ENCODE measurements at regions of chr20 and their contacts with region 1.

Region 1: GRCh38 chr20:18466894-18467730 is at the starts of genes DZANK1 and POLR3F:
- DNase-seq: peak; percentile 98
- H3K4me3 Mint-ChIP-seq: peak within 1 kb of the TSS; percentile 92
- H3K27ac Mint-ChIP-seq: peak within 1 kb of the TSS; percentile 89
- H3K4me1 Mint-ChIP-seq: peaks cover 20% of the 10 kb centered on the region
- H3K27me3 Mint-ChIP-seq: no peaks in the 10 kb centered on the region
- total RNA-seq, gene DZANK1: 1.8 and 1.9 TPM in 2 replicates
- total RNA-seq, gene POLR3F: 15.0 and 15.3 TPM in 2 replicates

Region 2: GRCh38 chr20:18412221-18412901 is 54.8 kb before region 1 on chr20:
- intact Hi-C with region 1: loop called (anchors 1 kb)
- DNase-seq: no peak
- H3K4me3 Mint-ChIP-seq: no peak overlapping the region
- H3K27ac Mint-ChIP-seq: no peak overlapping the region
- H3K4me1 Mint-ChIP-seq: peaks cover 5% of the 10 kb centered on the region
- H3K27me3 Mint-ChIP-seq: no peaks in the 10 kb centered on the region

Region 3: DNA sequence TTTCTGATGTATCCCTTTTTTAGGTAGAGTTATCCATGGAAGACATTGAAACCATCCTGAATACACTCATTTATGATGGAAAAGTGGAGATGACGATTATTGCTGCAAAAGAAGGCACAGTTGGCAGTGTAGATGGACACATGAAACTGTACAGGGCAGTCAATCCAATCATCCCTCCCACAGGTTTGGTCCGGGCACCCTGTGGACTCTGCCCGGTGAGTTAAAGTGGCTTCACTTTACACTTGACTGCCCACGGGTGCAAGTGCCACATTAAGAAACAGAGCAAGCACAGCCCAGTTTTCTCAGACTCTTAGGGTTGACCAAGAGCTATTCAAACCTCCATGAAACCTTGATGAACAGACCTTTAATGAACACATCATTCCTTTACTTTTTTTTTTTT is 14.5 kb after region 1 on chr20:
- intact Hi-C with region 1: no loop called
- DNase-seq: no peak
- H3K4me3 Mint-ChIP-seq: no peak overlapping the region
- H3K27ac Mint-ChIP-seq: no peak overlapping the region
- H3K4me1 Mint-ChIP-seq: no peaks in the 10 kb centered on the region
- H3K27me3 Mint-ChIP-seq: no peaks in the 10 kb centered on the region

Region 4: GRCh38 chr20:18496740-18497592 is 29.9 kb after region 1 on chr20 and contains the start of gene RBBP9:
- intact Hi-C with region 1: loop called (anchors 1 kb)
- DNase-seq: peak; percentile 93
- H3K4me3 Mint-ChIP-seq: peak within 1 kb of the TSS; percentile 99
- H3K27ac Mint-ChIP-seq: peak within 1 kb of the TSS; percentile 93
- H3K4me1 Mint-ChIP-seq: peaks cover 20% of the 10 kb centered on the region
- H3K27me3 Mint-ChIP-seq: no peaks in the 10 kb centered on the region
- total RNA-seq, gene RBBP9: 21.1 and 24.3 TPM in 2 replicates

Region 5: DNA sequence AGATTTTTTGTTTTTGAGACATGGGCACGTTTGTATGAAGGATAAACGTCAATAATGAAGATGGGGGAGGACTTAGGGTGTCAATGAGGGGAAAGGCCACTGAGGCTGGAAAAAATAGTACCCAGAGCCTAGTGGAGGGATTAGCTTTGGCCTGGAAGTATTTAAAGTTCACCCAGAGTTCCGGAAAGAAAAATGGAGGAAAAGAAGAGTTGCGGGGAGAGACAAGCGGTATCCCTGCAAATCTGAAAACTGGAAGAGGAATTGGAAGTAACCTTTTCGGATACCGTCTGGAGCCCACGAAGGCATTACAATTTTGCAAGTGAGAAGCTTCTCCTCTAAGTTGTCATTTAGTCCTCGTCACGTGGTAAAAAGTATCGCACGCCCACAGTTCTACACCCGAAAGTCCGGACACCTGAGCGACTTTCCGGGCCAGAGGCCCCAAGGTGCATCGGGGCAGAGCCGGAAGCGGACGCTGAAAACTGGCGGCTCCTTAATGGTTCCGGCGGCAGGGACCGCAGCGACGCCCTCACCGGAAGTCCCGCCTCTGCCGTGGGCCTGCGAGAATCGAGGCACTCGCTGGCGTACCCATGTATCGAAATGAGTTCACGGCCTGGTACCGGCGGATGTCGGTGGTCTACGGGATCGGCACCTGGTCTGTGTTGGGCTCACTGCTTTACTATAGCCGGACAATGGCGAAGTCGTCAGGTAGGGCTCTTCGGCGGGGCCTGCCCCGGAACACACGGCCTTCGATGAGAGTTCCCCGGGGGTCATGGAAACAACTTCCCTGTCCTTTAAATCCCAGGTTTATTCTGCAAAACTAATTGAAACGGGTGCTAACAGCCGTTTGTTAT is 100.0 kb after region 1 on chr20 and contains the start of gene SMIM26:
- intact Hi-C with region 1: loop called (anchors 1 kb)
- DNase-seq: peak; percentile 98
- H3K4me3 Mint-ChIP-seq: peak within 1 kb of the TSS; percentile 97
- H3K27ac Mint-ChIP-seq: peak within 1 kb of the TSS; percentile 96
- H3K4me1 Mint-ChIP-seq: peaks cover 14% of the 10 kb centered on the region
- H3K27me3 Mint-ChIP-seq: no peaks in the 10 kb centered on the region
- total RNA-seq, gene SMIM26: 55.8 and 60.2 TPM in 2 replicates

Region 6: GRCh38 chr20:18587665-18588573 is 120.8 kb after region 1 on chr20 and contains the start of gene DTD1:
- intact Hi-C with region 1: loop called (anchors 1 kb)
- DNase-seq: peak; percentile 96
- H3K4me3 Mint-ChIP-seq: peak within 1 kb of the TSS; percentile 94
- H3K27ac Mint-ChIP-seq: peak within 1 kb of the TSS; percentile 88
- H3K4me1 Mint-ChIP-seq: peaks cover 25% of the 10 kb centered on the region
- H3K27me3 Mint-ChIP-seq: peaks cover 7% of the 10 kb centered on the region
- total RNA-seq, gene DTD1: 49.2 and 49.9 TPM in 2 replicates

Region 7: DNA sequence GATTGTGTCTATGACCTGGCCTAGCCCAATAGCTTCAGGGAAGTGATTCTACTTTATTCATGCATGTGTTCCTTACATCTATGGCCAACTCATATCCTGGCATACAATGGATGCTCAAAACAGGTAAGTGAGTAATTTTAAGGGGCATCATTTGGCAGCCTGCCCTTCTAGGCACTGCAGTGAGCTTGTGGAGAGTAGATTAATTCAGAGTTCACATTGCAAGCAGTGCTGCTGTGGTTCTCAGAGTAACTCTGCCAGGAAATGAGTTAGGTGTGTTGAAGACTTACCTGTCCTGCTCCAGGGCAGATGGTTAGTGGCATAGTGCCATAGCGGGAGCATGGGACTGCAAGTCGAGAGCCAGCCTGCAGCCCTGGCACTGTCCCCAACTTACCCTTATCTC is 504.5 kb after region 1 on chr20:
- intact Hi-C with region 1: no loop called
- DNase-seq: no peak
- H3K4me3 Mint-ChIP-seq: no peak overlapping the region
- H3K27ac Mint-ChIP-seq: no peak overlapping the region
- H3K4me1 Mint-ChIP-seq: no peaks in the 10 kb centered on the region
- H3K27me3 Mint-ChIP-seq: peaks cover 2% of the 10 kb centered on the region